Activated CD4-positive, alpha-beta memory T cell treated with anti-CD3 and anti-CD28 coated beads, Interleukin-2, amount 10 ng/mL, durations not matched to agents 7 days and 5 days (primary cell): ENCODE measurements at regions of chr14 and their contacts with region 1.

Region 1: GRCh38 chr14:106738075-106738474 is 1211.7 kb downstream of the TMEM121 start:
- DNase-seq: no peak
- H3K4me3 Mint-ChIP-seq: no peak overlapping the region
- H3K27ac Mint-ChIP-seq: no peak overlapping the region
- H3K4me1 Mint-ChIP-seq: peaks cover 8% of the 10 kb centered on the region
- H3K27me3 Mint-ChIP-seq: peaks cover 14% of the 10 kb centered on the region

Region 2: DNA sequence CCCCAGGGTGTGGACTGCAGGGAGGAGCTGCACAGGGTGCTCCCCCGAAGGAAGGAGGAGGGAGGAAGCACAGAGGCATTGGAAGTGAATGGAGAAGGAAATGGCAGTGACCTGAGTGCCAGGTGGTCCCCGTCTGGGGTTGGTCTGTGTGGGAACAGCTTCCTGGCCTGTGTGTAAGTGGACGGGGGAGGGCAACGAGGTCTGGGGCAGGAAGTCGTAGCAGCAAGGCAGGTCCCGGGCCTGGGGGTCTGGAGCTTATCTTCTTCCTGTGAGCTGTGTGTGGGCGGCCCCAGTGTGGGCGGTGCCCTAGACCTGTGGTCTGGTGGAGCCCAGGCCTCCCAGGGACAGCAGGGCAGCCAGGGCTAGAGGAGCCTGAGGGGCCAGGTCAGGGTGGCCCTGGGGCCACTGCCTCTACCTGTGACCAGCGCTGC is 829.6 kb before region 1 on chr14:
- CTCF ChIA-PET with region 1: no interaction called
- POLR2A ChIA-PET with region 1: no interaction called
- DNase-seq: no peak
- H3K4me3 Mint-ChIP-seq: no peak overlapping the region
- H3K27ac Mint-ChIP-seq: no peak overlapping the region
- H3K4me1 Mint-ChIP-seq: no peaks in the 10 kb centered on the region
- H3K27me3 Mint-ChIP-seq: peaks cover 6% of the 10 kb centered on the region

Region 3: DNA sequence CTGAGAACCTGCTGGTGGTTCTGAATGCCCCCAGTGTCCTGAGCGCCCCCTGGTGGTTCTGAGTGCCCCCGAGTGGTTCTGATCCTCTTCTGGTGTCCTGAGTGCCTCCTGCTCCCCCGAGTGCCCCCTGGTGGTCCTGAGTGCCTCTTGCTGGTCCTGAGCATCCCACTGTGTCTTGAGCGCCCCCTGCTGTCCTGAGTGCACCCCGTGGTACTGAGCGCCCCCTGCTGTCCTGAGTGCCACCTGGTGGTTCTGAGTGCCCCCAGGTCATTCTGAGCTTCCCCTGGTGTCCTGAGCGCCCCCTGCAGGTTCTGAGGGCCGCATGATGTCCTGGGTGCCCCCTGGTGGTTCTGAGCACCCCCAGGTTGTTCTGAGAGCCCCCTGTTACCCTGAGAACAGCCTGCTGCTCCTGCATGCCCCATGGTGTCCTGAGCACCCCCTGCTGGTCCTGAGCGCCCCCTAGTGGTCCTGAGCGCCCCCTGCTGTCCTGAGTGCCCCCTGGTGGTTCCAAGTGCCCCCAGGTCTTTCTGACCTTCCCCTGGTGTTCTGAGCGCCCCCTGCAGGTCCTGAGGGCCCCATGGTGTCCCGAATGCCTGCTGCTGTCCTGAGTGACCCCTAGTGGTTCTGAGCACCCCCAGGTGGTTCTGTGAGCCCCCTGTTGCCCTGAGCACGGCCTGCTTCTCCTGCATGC is 46.3 kb before region 1 on chr14:
- CTCF ChIA-PET with region 1: interaction called, 34 read pairs
- POLR2A ChIA-PET with region 1: no interaction called
- DNase-seq: peak; percentile 83
- H3K4me3 Mint-ChIP-seq: no peak overlapping the region
- H3K27ac Mint-ChIP-seq: no peak overlapping the region
- H3K4me1 Mint-ChIP-seq: peaks cover 4% of the 10 kb centered on the region
- H3K27me3 Mint-ChIP-seq: peaks cover 16% of the 10 kb centered on the region